Vagina (tissue), 2 donors: ENCODE measurements at regions of chr1 and their contacts with region 1.

Region 1: GRCh38 chr1:234978397-234979295 is 150.0 kb downstream of the TOMM20 start:
- DNase-seq: no peak
- H3K4me3 ChIP-seq: peak overlapping the region in 1 of 2 donors; percentile 5
- H3K27ac ChIP-seq: peak overlapping the region; percentile 85
- H3K4me1 ChIP-seq: peaks cover 77% of the 10 kb centered on the region
- H3K27me3 ChIP-seq: no peaks in the 10 kb centered on the region
- CTCF ChIP-seq: no peak
- POLR2A ChIP-seq: no peak

Region 2: DNA sequence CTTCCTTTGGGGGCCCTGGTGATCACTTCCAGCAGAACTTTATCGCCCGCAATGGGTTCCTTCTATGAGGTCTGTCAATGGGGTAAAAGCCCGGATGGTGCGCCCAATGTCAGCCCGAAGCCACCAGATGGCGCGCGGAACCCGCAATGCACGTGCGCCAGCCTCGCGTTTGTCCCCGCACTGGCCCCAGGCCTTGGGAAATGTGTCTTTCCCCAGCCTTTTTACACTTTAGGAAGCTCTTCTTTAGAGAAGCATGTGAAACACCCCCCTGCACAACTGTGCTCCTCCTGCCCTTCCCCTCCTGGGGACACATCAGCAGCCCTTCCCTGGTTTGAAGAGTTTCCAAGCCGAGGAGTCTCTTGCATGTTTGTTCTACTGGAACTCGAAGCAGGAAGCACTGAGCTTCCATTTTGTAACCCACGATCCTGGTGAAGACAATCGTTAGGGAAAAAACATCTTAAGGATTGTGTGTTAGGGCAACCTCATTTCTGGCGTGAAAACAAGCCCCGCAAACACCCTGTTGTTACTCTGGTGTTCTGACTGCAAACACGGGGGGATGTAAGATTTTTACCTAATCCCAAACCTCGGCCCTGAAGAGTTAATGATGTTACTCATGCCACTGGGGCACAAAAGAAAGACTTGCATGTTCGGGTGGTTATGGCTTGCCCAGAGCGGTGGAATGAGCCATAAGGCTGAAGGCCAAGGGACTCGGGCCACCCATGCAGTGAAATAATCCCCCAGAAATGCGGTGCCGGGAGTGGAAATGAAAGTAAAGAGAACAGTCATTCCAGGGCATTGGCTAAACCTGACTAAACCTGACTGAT is 479.3 kb before region 1 on chr1:
- intact Hi-C with region 1: loop called (anchors 10 kb)
- DNase-seq: peak in 1 of 2 donors; percentile 97
- H3K4me3 ChIP-seq: peak overlapping the region; percentile 22
- H3K27ac ChIP-seq: peak overlapping the region; percentile 90
- H3K4me1 ChIP-seq: peaks cover 25% of the 10 kb centered on the region
- H3K27me3 ChIP-seq: no peaks in the 10 kb centered on the region
- CTCF ChIP-seq: peak; percentile 81 to 95 (median 93)
- POLR2A ChIP-seq: no peak

Region 3: GRCh38 chr1:234533975-234534876 is 444.4 kb before region 1 on chr1:
- intact Hi-C with region 1: loop called (anchors 10 kb)
- DNase-seq: peak in 1 of 2 donors; percentile 98
- H3K4me3 ChIP-seq: no peak overlapping the region
- H3K27ac ChIP-seq: peak overlapping the region; percentile 98
- H3K4me1 ChIP-seq: peaks cover 93% of the 10 kb centered on the region
- H3K27me3 ChIP-seq: no peaks in the 10 kb centered on the region
- CTCF ChIP-seq: no peak
- POLR2A ChIP-seq: no peak

Region 4: GRCh38 chr1:234610348-234611152 is 368.1 kb before region 1 on chr1:
- intact Hi-C with region 1: loop called (anchors 5 kb)
- DNase-seq: no peak
- H3K4me3 ChIP-seq: peak overlapping the region; percentile 56 to 62
- H3K27ac ChIP-seq: peak overlapping the region; percentile 99
- H3K4me1 ChIP-seq: peaks cover 46% of the 10 kb centered on the region
- H3K27me3 ChIP-seq: no peaks in the 10 kb centered on the region
- CTCF ChIP-seq: no peak
- POLR2A ChIP-seq: peak in 1 of 2 donors; percentile 94

Region 5: GRCh38 chr1:234925440-234926263 is 53.0 kb before region 1 on chr1:
- intact Hi-C with region 1: loop called (anchors 10 kb)
- DNase-seq: peak in 1 of 2 donors; percentile 83
- H3K4me3 ChIP-seq: no peak overlapping the region
- H3K27ac ChIP-seq: peak overlapping the region; percentile 88
- H3K4me1 ChIP-seq: peaks cover 42% of the 10 kb centered on the region
- H3K27me3 ChIP-seq: no peaks in the 10 kb centered on the region
- CTCF ChIP-seq: no peak
- POLR2A ChIP-seq: no peak

Region 6: GRCh38 chr1:235077571-235078479 is 99.2 kb after region 1 on chr1:
- intact Hi-C with region 1: loop called (anchors 5 kb)
- DNase-seq: no peak
- H3K4me3 ChIP-seq: no peak overlapping the region
- H3K27ac ChIP-seq: peak overlapping the region; percentile 55
- H3K4me1 ChIP-seq: peaks cover 91% of the 10 kb centered on the region
- H3K27me3 ChIP-seq: no peaks in the 10 kb centered on the region
- CTCF ChIP-seq: no peak
- POLR2A ChIP-seq: no peak